ENCODE measurements at regions of chr1 and their contacts with region 1.

Region 1: GRCh38 chr1:79792219-79792930 is 785.8 kb upstream of the ADGRL4 start:
- DNase-seq: no peak
- H3K4me3 ChIP-seq: peak overlapping the region in 1 of 2 donors; percentile 19
- H3K27ac ChIP-seq: peak overlapping the region; percentile 25 to 53
- H3K4me1 ChIP-seq: peaks cover 0 to 4% of the 10 kb centered on the region in 2 donors
- H3K27me3 ChIP-seq: no peaks in the 10 kb centered on the region
- CTCF ChIP-seq: no peak

Region 2: DNA sequence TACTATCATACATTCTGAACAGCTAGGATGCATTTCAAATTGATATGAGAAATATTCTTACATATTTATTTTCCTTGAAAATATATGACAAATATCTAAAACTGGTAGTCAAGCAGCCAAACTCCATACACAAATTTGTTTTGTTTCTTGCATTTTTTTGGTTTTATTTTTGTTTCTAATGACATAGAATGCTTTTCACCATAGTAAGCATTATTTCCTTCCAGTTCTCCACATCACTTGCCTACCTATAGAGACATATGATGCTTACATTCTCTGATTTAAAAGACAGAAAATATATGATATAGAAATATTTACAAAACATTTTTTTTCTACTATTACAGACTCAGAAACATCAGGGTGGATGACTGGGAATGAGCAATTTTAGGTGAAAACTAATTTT is 59.4 kb before region 1 on chr1:
- intact Hi-C with region 1: loop called (anchors 5 kb)
- DNase-seq: no peak
- H3K4me3 ChIP-seq: no peak overlapping the region
- H3K27ac ChIP-seq: no peak overlapping the region
- H3K4me1 ChIP-seq: no peaks in the 10 kb centered on the region
- H3K27me3 ChIP-seq: no peaks in the 10 kb centered on the region
- CTCF ChIP-seq: no peak